ENCODE measurements at regions of chr4 and their contacts with region 1.

Region 1: DNA sequence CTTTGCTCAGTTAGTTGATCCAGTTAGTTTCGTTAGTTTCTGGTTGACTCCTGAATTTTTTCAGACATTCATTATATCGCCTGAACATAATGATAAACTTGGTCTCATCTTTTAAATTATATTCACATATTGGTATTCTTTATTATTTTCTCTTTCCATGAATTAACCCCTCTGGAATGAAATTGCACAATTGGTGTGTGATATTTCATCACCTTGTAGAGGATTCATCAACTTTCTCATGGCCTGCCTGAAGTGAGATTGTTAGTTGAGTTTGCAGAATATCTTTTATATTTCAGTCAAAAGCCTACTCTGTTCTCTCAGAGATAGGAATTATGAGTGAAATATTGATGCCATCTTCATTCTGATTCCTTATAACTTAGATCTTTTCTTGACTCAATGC is 1160.6 kb upstream of the AGA start:
- DNase-seq: no peak

Region 2: GRCh38 chr4:178799204-178799603 is 196.4 kb after region 1 on chr4:
- intact Hi-C with region 1: loop called in 1 of 2 experiments (anchors 5 kb)
- DNase-seq: no peak

Region 3: GRCh38 chr4:180483036-180483435 is 1880.2 kb after region 1 on chr4:
- intact Hi-C with region 1: no loop called
- DNase-seq: no peak